GM18951 (cell line): ENCODE measurements at regions of chr5 and their contacts with region 1.

Region 1: GRCh38 chr5:35003018-35003957 is 44.5 kb downstream of the AGXT2 start:
- POLR2A ChIP-seq: no peak

Region 2: DNA sequence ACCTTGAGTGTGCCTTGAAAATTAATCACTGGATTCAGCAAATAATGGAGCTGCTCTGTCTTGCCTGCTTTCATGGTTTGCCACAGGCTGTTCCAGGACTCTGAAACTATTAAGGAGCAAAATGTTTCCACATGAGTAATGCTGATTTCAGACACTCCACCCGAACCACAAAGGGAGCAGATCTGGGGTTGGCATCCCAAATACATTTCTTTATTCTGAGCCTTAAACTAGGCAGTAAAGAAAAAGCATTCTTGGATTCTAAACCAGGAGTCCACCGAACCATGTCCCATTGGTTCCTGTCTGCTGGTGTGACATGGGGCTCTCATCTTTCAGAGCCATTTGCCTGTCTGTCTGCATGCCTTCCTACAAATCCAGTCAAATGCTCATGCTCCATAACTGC is 950.2 kb before region 1 on chr5:
- in situ Hi-C with region 1: no loop called
- POLR2A ChIP-seq: no peak

Region 3: GRCh38 chr5:34957857-34958690 is 45.2 kb before region 1 on chr5:
- in situ Hi-C with region 1: loop called (anchors 10 kb)
- POLR2A ChIP-seq: no peak